MCF 10A (cell line): ENCODE measurements at regions of chr4 and their contacts with region 1.

Region 1: GRCh38 chr4:14504162-14504561 is 498.1 kb upstream of the CPEB2 start:
- DNase-seq: no peak
- H3K4me3 Mint-ChIP-seq: no peak overlapping the region
- H3K27ac Mint-ChIP-seq: no peak overlapping the region
- H3K4me1 Mint-ChIP-seq: peaks cover 10% of the 10 kb centered on the region
- H3K27me3 Mint-ChIP-seq: no peaks in the 10 kb centered on the region
- CTCF ChIP-seq: no peak

Region 2: GRCh38 chr4:14233126-14233525 is 271.0 kb before region 1 on chr4:
- CTCF ChIA-PET with region 1: no interaction called
- POLR2A ChIA-PET with region 1: no interaction called
- intact Hi-C with region 1: no loop called
- DNase-seq: no peak
- H3K4me3 Mint-ChIP-seq: no peak overlapping the region
- H3K27ac Mint-ChIP-seq: no peak overlapping the region
- H3K4me1 Mint-ChIP-seq: peaks cover 17% of the 10 kb centered on the region
- H3K27me3 Mint-ChIP-seq: no peaks in the 10 kb centered on the region
- CTCF ChIP-seq: no peak

Region 3: DNA sequence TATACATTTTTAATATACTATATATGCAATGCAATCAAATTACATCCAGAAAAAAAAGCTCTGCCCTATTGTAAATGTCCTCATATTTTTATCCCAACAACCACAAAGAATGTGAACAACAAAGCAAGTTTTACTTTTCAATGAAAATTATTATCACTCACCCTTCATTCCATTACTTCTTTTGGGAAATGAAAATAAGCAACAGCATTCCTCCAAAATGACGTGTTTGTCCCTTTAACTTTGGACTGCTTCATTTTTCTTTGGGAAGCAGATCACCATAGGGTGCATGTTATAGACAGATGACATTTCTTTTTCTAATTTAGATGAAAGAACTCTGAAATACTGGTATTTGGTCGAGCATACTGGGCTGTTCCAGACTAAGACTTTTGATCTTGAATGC is 209.6 kb before region 1 on chr4:
- CTCF ChIA-PET with region 1: no interaction called
- POLR2A ChIA-PET with region 1: no interaction called
- intact Hi-C with region 1: no loop called
- DNase-seq: no peak
- H3K4me3 Mint-ChIP-seq: no peak overlapping the region
- H3K27ac Mint-ChIP-seq: no peak overlapping the region
- H3K4me1 Mint-ChIP-seq: peaks cover 23% of the 10 kb centered on the region
- H3K27me3 Mint-ChIP-seq: no peaks in the 10 kb centered on the region
- CTCF ChIP-seq: no peak

Region 4: DNA sequence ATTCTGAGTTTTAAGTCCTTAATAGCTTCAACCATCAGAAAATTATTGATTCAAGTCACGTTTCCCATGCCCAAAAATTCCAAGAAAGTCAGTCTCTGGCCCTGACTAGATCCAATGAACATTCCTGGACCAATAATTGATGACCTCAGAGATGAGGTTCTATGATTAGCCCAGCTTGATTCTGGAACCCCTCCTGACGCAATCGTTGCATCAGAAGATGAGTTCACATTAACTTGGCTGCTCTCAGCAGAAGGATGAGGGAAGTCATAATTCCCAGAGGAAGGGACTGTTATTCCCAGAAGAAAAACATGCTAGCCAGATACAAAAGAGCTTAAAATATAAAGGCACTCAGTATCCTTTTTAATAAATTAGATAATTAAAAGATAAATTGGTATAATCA is 463.8 kb after region 1 on chr4:
- CTCF ChIA-PET with region 1: no interaction called
- POLR2A ChIA-PET with region 1: no interaction called
- intact Hi-C with region 1: loop called (anchors 10 kb)
- DNase-seq: peak; percentile 6
- H3K4me3 Mint-ChIP-seq: no peak overlapping the region
- H3K27ac Mint-ChIP-seq: no peak overlapping the region
- H3K4me1 Mint-ChIP-seq: no peaks in the 10 kb centered on the region
- H3K27me3 Mint-ChIP-seq: no peaks in the 10 kb centered on the region
- CTCF ChIP-seq: no peak